Mammary epithelial cell (primary cell): ENCODE measurements at regions of chr12 and their contacts with region 1.

Region 1: DNA sequence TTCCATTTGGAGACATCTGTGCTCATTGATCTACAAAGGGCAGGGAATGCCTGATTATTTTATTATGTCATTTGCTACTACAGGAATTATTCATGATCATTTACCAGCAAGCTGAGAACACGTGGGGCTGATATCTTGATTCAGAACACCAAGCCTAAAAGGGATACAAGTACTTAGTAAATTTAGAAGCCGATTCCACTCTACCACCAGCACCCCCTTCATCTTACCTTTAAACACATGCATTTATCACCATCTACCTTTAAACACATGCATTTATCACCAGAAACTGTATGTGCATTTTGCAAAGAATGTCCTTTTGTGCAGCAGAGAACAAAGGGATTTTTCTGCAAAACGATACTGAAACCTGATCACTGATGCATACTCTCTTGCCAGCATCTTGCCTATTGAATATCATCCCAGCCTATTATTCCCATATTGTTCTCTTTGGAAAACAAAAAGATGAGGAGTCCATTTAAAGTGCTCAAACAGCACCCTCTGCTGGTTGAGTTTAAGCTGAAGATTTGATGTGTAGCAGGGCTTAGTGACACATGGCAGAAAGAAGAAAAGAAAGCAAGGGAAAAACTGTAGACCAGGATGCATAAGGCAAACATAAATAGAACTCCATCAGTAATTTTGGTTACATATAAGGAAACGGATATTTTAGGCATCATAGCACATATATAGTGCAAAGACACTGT is 132.6 kb upstream of the PLEKHG7 start:
- DNase-seq: peak; percentile 80
- H3K4me3 ChIP-seq: no peak overlapping the region
- H3K27ac ChIP-seq: no peak overlapping the region
- H3K4me1 ChIP-seq: peaks cover 27% of the 10 kb centered on the region
- H3K27me3 ChIP-seq: no peaks in the 10 kb centered on the region
- CTCF ChIP-seq: peak; percentile 51 to 69

Region 2: DNA sequence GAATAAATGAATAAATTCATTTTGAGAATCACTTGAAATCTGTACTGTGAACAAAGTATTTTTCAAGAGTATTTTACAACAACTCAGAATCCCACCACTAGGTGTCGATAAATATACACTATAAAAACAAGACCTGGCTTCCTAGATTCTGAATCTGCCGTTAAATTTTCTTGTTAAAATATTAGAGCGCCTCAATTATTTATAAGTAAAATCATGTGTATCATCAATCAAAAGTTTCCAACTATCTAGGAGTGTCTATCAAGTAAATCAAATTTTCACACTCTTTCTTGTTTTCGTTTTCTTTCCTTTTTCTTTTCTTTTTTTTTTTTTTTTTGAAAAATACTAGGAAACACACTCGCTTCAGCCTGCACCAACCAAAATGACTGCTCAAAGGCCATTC is 1208.3 kb before region 1 on chr12:
- CTCF ChIA-PET with region 1: no interaction called
- dilution Hi-C with region 1: no loop called
- in situ Hi-C with region 1: no loop called
- intact Hi-C with region 1: loop called (anchors 1 kb)
- DNase-seq: peak; percentile 19
- H3K4me3 ChIP-seq: no peak overlapping the region
- H3K27ac ChIP-seq: no peak overlapping the region
- H3K4me1 ChIP-seq: no peaks in the 10 kb centered on the region
- H3K27me3 ChIP-seq: peaks cover 11% of the 10 kb centered on the region
- CTCF ChIP-seq: peak; percentile 54 to 62

Region 3: GRCh38 chr12:91577586-91578539 is 992.3 kb before region 1 on chr12:
- CTCF ChIA-PET with region 1: no interaction called
- dilution Hi-C with region 1: no loop called
- in situ Hi-C with region 1: no loop called
- intact Hi-C with region 1: loop called (anchors 5 kb)
- DNase-seq: peak; percentile 37
- H3K4me3 ChIP-seq: peak overlapping the region in 2 of 3 experiments; percentile 38 to 46
- H3K27ac ChIP-seq: no peak overlapping the region
- H3K4me1 ChIP-seq: no peaks in the 10 kb centered on the region
- H3K27me3 ChIP-seq: no peaks in the 10 kb centered on the region
- CTCF ChIP-seq: peak; percentile 56 to 58

Region 4: GRCh38 chr12:91991399-91992187 is 578.6 kb before region 1 on chr12:
- CTCF ChIA-PET with region 1: no interaction called
- dilution Hi-C with region 1: no loop called
- in situ Hi-C with region 1: no loop called
- intact Hi-C with region 1: loop called (anchors 1 kb)
- DNase-seq: peak; percentile 14
- H3K4me3 ChIP-seq: no peak overlapping the region
- H3K27ac ChIP-seq: no peak overlapping the region
- H3K4me1 ChIP-seq: peaks cover 4% of the 10 kb centered on the region
- H3K27me3 ChIP-seq: no peaks in the 10 kb centered on the region
- CTCF ChIP-seq: no peak

Region 5: GRCh38 chr12:92356425-92356824 is 213.8 kb before region 1 on chr12:
- CTCF ChIA-PET with region 1: no interaction called
- dilution Hi-C with region 1: no loop called
- in situ Hi-C with region 1: no loop called
- intact Hi-C with region 1: loop called (anchors 2 kb)
- DNase-seq: peak; percentile 35
- H3K4me3 ChIP-seq: no peak overlapping the region
- H3K27ac ChIP-seq: no peak overlapping the region
- H3K4me1 ChIP-seq: no peaks in the 10 kb centered on the region
- H3K27me3 ChIP-seq: no peaks in the 10 kb centered on the region
- CTCF ChIP-seq: no peak

Region 6: DNA sequence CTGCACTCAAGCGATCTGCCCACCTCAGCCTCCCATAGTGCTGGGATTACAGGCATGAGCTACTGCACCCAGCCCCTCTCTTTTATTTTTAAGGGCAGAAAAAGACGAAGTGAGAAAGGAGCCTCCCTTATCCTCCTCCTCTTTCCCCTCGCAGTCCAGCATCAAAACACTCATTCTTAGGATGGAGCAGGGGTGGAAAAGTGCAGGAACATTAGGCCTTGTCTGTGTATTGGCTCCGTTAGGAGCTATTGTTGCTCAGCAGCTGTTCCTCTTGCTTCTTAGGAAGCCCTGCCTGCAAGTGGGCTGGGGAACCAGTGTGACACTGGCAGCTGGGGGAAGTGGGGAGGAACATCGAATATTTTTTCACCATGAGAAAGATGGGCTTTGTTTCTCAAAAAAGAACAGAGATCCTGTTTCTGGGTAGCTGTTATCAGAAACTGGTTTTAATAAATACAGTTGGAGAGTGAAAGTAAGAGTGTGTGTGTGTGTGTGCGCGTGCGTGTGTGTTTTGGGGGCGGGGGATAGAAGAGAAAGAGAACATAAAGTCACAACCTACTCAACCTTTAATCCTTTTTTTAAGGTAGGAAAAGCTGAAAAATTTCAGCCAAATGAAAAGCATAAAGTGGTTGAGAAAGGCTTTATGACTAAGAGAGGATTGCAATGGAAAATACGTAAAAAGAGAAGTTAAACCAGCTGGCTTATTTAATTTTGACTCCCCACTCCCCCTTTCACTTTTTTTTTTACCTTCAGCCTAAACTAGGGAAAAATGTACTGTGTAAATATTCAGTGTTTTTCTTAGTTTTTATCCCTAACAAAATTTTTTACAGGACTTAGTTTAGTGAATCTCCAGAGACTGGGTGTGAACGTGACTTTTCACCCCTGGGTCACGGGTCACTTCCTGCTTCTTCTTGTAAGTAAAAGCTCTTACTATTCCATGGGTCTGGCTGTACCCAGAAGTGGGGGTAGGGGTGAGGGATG is 64.7 kb before region 1 on chr12:
- CTCF ChIA-PET with region 1: interaction called, 4 read pairs
- dilution Hi-C with region 1: no loop called
- in situ Hi-C with region 1: no loop called
- intact Hi-C with region 1: loop called (anchors 1 kb)
- DNase-seq: no peak
- H3K4me3 ChIP-seq: no peak overlapping the region
- H3K27ac ChIP-seq: no peak overlapping the region
- H3K4me1 ChIP-seq: peaks cover 3% of the 10 kb centered on the region
- H3K27me3 ChIP-seq: no peaks in the 10 kb centered on the region
- CTCF ChIP-seq: no peak

Region 7: DNA sequence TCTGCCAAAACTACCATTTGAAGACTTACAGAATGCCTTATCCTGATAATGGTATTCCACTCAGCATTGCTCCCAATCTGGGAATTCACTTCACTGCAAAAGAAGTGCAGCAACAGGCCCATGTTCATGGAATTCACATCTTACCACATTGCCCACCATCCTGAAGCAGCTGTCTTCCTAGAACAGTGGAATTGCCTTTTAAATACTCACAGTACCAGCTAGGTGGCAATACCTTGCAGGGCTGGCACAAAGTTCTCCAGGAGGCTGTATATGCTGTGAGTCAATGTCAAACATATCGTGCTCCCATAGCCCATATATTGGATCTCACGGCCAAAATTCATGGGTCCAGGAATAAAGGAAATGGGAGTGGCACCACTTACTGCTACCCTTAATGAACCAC is 48.8 kb after region 1 on chr12:
- CTCF ChIA-PET with region 1: no interaction called
- dilution Hi-C with region 1: no loop called
- in situ Hi-C with region 1: no loop called
- intact Hi-C with region 1: no loop called
- DNase-seq: no peak
- H3K4me3 ChIP-seq: no peak overlapping the region
- H3K27ac ChIP-seq: no peak overlapping the region
- H3K4me1 ChIP-seq: peaks cover 28% of the 10 kb centered on the region
- H3K27me3 ChIP-seq: no peaks in the 10 kb centered on the region
- CTCF ChIP-seq: peak in 1 of 2 donors; percentile 9

Region 8: GRCh38 chr12:92649511-92650227 is 79.5 kb after region 1 on chr12:
- CTCF ChIA-PET with region 1: no interaction called
- dilution Hi-C with region 1: no loop called
- in situ Hi-C with region 1: no loop called
- intact Hi-C with region 1: loop called (anchors 1 kb)
- DNase-seq: peak; percentile 82
- H3K4me3 ChIP-seq: no peak overlapping the region
- H3K27ac ChIP-seq: no peak overlapping the region
- H3K4me1 ChIP-seq: peaks cover 16% of the 10 kb centered on the region
- H3K27me3 ChIP-seq: no peaks in the 10 kb centered on the region
- CTCF ChIP-seq: peak; percentile 62 to 84